Right lobe of liver (tissue), 6 donors: ENCODE measurements at regions of chr4 and their contacts with region 1.

Region 1: GRCh38 chr4:99894161-99894997 is at the start of gene LAMTOR3:
- DNase-seq: peak; percentile 91 to 95 (median 95)
- ATAC-seq: peak; percentile 99 to 100 (median 100)
- H3K4me3 ChIP-seq: peak within 1 kb of the TSS; percentile 73 to 88 (median 80)
- H3K27ac ChIP-seq: peak within 1 kb of the TSS; percentile 49 to 69 (median 69)
- H3K4me1 ChIP-seq: peaks cover 0 to 6% (median 2%) of the 10 kb centered on the region in 4 donors
- H3K27me3 ChIP-seq: no peaks in the 10 kb centered on the region
- CTCF ChIP-seq: no peak
- POLR2A ChIP-seq: no peak
- total RNA-seq, gene LAMTOR3: 14.7 to 24.6 (median 18.9) TPM

Region 2: GRCh38 chr4:99949034-99949998 is 54.9 kb after region 1 on chr4:
- intact Hi-C with region 1: loop called in 1 of 2 experiments (anchors 10 kb)
- DNase-seq: peak; percentile 87 to 90 (median 87)
- ATAC-seq: peak; percentile 55 to 62 (median 56)
- H3K4me3 ChIP-seq: peak overlapping the region; percentile 77 to 91 (median 82)
- H3K27ac ChIP-seq: peak overlapping the region in 2 of 3 donors; percentile 59 to 78
- H3K4me1 ChIP-seq: peaks cover 0 to 18% (median 4%) of the 10 kb centered on the region in 4 donors
- H3K27me3 ChIP-seq: no peaks in the 10 kb centered on the region
- CTCF ChIP-seq: peak; percentile 84 to 91 (median 86)
- POLR2A ChIP-seq: no peak